Activated CD4-positive, alpha-beta T cell treated with anti-CD3 and anti-CD28 coated beads, Interleukin-2, amount 10 ng/mL, durations not matched to agents 24 days and 14 days (primary cell): ENCODE measurements at regions of chr10 and their contacts with region 1.

Region 1: GRCh38 chr10:125822878-125823662 is at the starts of genes BCCIP and UROS:
- DNase-seq: peak; percentile 97
- H3K4me3 Mint-ChIP-seq: no peak within 1 kb of the TSS
- H3K27ac Mint-ChIP-seq: peak within 1 kb of the TSS; percentile 50
- H3K4me1 Mint-ChIP-seq: peaks cover 20% of the 10 kb centered on the region
- H3K27me3 Mint-ChIP-seq: no peaks in the 10 kb centered on the region
- total RNA-seq, gene BCCIP: 135 and 143 TPM in 2 replicates
- total RNA-seq, gene UROS: 50.6 and 53.8 TPM in 2 replicates

Region 2: DNA sequence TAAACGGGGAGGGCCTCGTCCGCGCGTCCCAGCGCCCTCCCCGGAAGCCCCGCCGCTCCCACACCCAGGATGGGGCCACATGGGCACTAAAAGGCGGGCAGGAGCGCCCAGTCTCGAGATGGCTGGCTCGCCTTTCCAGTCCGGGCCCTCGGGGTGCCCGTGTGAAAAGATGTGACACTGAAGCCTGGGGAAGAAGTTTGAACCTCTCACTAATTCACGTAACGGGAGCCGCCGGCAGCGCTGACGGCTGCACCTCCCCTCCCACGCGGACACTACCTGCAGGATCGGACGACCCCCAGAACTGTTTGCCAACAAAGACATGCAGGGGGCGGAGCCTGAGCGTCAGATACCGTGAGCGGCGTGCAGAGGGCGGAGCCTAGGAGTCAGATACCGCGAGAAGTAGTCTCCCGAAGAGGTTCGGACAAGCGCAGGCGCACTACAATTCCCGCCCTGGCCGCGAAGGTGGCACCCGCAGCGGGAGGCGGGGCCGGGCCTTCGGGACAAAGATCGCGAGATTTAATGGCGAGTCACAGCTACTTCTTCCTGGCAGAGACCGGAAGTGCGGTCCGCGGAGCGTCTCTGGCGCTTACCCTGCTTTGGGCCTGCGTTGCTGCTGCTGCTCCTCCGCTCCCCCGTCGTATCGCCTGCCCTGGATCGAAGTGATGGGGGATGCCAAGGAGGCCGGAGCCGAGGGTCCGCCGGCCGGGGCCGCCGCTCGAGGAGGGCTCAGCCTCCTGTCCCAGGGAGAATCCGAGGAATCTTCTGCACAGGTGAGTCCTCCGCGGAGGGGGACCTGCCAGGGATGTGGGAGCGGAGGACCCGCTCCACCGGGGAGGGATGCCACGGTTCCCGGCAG is 103.7 kb before region 1 on chr10 and contains the start of gene EDRF1:
- intact Hi-C with region 1: loop called (anchors 1 kb)
- DNase-seq: peak; percentile 100
- H3K4me3 Mint-ChIP-seq: peak within 1 kb of the TSS; percentile 98
- H3K27ac Mint-ChIP-seq: peak within 1 kb of the TSS; percentile 96
- H3K4me1 Mint-ChIP-seq: peaks cover 18% of the 10 kb centered on the region
- H3K27me3 Mint-ChIP-seq: no peaks in the 10 kb centered on the region
- total RNA-seq, gene EDRF1: 40.8 and 43.2 TPM in 2 replicates

Region 3: DNA sequence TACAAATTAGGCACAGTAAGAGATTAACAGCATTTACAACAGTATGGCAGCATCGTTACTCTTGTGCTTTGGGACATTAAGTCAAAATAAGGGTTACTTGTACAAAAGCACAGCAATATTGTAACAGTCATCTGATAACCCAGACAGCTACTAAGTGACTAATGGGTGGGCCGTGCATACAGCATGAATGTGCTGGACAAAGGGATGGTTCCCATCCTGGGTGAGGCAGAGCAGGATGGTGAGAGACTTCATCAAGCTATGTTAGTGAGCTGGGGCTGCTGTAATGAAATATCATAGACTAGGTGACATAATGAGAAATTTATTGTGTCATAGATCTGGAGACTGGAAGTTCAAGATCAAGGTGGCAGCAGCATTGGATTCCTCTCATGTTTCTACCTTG is 78.2 kb before region 1 on chr10:
- intact Hi-C with region 1: loop called (anchors 5 kb)
- DNase-seq: no peak
- H3K4me3 Mint-ChIP-seq: no peak overlapping the region
- H3K27ac Mint-ChIP-seq: no peak overlapping the region
- H3K4me1 Mint-ChIP-seq: peaks cover 5% of the 10 kb centered on the region
- H3K27me3 Mint-ChIP-seq: no peaks in the 10 kb centered on the region

Region 4: GRCh38 chr10:126049759-126050695 is 227.0 kb after region 1 on chr10:
- intact Hi-C with region 1: no loop called
- DNase-seq: no peak
- H3K4me3 Mint-ChIP-seq: no peak overlapping the region
- H3K27ac Mint-ChIP-seq: no peak overlapping the region
- H3K4me1 Mint-ChIP-seq: no peaks in the 10 kb centered on the region
- H3K27me3 Mint-ChIP-seq: no peaks in the 10 kb centered on the region